Panc1 (cell line): ENCODE measurements at regions of chrX and their contacts with region 1.

Region 1: DNA sequence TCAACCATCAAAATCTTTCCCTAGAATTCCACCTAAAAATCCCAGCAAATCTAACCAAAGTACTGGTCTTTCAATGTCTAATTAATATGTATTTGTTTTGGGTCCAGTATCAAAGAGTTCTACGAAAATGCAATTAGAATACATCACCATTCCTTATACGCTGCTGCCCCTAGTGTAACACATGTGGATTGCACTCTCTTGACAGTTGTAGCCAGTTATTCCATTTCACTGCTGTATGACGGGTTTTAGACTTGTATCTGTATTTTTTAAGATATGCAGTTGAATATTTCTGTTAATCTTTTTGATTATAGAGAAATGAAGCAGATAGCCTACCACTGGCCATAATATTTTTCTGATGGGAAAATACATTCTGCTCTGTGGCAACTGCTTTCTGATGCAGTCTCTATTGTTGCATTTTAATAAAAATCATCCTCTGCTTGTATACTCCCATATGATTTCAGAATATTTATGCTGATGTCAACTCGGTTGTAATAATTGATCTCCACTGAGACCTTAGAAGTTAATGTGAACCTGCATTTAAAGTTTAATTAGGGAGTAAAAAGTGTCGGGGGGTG is 17.1 kb upstream of the PAGE2B start:
- DNase-seq: peak; percentile 20
- ATAC-seq: peak; percentile 72; the same call in 1 of the 2 replicates
- H3K4me3 ChIP-seq: no peak overlapping the region
- H3K27ac ChIP-seq: no peak overlapping the region
- H3K4me1 ChIP-seq: no peaks in the 10 kb centered on the region
- H3K27me3 ChIP-seq: no peaks in the 10 kb centered on the region; the same call in 1 of the 2 replicates
- CTCF ChIP-seq: peak; percentile 75; the same call in 1 of the 2 replicates

Region 2: GRCh38 chrX:54891573-54891972 is 166.2 kb before region 1 on chrX:
- CTCF ChIA-PET with region 1: no interaction called
- POLR2A ChIA-PET with region 1: no interaction called
- in situ Hi-C with region 1: no loop called
- intact Hi-C with region 1: loop called (anchors 2 kb)
- DNase-seq: no peak
- ATAC-seq: 0 out of 2 replicates have a peak, but pooled peaks have one; percentile 76
- H3K4me3 ChIP-seq: no peak overlapping the region
- H3K27ac ChIP-seq: no peak overlapping the region
- H3K4me1 ChIP-seq: no peaks in the 10 kb centered on the region
- H3K27me3 ChIP-seq: no peaks in the 10 kb centered on the region
- CTCF ChIP-seq: peak; percentile 52; the same call in 1 of the 2 replicates

Region 3: DNA sequence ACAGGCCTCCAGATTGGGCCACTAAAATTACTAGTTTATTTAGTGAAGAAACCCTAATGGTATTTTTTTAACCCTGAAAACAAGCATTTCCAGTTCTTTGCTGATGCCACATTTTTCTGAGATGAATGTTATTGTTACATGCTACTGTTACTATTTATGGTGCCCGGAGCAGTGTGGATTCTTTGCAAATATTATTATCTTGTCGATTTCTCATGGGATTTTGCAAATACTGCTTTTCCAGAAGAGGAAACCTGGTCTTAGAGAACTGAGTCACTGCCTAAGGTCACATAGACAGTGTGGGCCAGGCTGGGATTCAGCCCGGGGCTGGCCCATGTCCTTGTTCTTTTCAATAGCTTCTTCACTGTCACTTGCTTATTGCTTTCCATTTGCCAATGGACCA is 18.3 kb before region 1 on chrX:
- CTCF ChIA-PET with region 1: no interaction called
- POLR2A ChIA-PET with region 1: no interaction called
- in situ Hi-C with region 1: no loop called
- intact Hi-C with region 1: no loop called
- DNase-seq: no peak
- ATAC-seq: no peak
- H3K4me3 ChIP-seq: no peak overlapping the region
- H3K27ac ChIP-seq: no peak overlapping the region
- H3K4me1 ChIP-seq: no peaks in the 10 kb centered on the region
- H3K27me3 ChIP-seq: no peaks in the 10 kb centered on the region
- CTCF ChIP-seq: no peak

Region 4: DNA sequence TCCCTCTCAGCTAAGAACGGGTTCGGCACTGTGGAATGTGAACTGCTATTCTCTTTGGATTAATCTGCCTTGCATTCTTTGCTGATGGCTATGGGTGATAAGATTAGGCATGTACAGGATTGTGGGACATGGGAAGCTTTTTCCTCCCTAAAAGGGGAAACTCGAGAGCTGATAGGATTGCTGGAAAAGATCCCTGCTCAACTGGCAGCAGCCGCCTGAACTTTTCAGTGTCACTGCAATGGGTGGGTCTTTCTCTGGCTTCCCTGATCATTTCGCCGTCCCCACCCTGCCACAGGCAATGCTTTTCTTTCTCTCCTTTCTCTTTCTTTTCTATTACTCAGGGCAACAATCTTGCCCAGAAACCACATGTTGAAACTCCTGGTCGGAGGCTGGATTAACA is 51.5 kb after region 1 on chrX:
- CTCF ChIA-PET with region 1: no interaction called
- POLR2A ChIA-PET with region 1: no interaction called
- in situ Hi-C with region 1: no loop called
- intact Hi-C with region 1: no loop called
- DNase-seq: no peak
- ATAC-seq: no peak
- H3K4me3 ChIP-seq: no peak overlapping the region
- H3K27ac ChIP-seq: no peak overlapping the region
- H3K4me1 ChIP-seq: no peaks in the 10 kb centered on the region
- H3K27me3 ChIP-seq: no peaks in the 10 kb centered on the region
- CTCF ChIP-seq: no peak